GM10248 (cell line): ENCODE measurements at regions of chr1 and their contacts with region 1.

Region 1: DNA sequence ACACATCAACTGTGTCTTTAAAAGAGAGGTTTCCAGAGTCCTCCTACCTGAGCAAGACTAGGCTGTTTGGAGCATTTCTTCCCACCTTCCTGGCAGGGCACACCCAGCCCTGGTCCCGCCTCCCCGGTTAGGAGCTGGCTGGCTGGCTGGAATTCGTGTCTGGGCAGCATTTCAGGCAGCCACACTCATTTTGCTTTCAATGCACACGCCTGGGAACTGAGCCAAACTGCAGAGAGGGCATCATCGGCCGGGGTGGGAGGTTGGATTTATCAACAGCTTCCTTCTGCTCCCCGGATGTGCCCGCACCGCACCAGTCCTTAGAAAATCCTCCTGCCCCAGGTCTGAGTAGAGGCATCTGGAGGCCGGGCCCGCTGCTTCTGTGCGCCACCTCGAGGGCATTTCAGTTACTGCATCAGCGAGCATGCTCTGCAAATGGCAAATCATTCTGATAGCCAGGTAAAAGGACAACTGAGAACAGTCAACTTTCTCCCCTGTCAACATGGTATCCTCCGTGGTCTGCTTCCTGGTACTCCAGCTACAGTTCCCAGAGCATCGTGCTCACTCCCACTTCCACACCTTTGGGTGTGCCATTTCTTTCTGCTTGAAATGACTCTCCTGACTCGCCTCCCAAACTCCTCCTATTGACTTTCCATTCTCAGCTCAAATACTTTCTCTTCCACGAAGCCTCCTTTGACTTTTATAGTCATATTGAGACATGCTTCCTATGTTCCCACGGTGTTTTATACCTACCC is 20.6 kb downstream of the TCEA3 start:
- DNase-seq: peak; percentile 83
- CTCF ChIP-seq: peak; percentile 96

Region 2: DNA sequence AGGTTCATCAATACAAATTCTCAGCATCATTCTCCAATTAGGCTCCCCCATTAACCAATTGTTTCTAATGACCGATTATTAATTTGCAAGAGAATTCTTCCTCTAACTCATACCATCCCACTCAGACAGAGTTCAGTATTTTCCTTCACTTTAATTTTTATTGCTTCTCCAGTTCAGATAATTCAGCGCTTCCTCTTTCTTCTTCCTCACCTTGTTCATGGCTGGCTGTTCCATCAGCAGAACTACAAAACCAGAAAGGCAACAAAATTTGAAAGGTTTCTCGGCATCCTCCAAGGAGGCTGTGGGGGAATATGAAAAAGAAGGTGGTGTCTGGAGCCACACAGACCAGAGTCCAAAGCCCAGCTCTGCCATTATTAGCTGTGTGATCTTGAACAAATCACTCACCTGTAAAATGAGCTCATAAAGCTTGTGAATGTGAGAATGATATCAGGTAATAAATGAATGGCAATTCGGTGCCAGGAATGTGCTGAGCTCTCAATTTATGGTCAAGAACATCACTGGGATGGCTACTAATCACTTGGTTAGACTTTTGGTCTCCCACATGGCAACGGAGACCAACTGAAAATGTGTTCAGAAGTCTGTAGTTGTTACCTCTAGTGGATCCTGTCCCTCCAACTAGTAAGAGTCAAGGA is 22.6 kb before region 1 on chr1:
- CTCF ChIA-PET with region 1: interaction called, 11 read pairs
- POLR2A ChIA-PET with region 1: no interaction called
- DNase-seq: no peak
- CTCF ChIP-seq: no peak

Region 3: DNA sequence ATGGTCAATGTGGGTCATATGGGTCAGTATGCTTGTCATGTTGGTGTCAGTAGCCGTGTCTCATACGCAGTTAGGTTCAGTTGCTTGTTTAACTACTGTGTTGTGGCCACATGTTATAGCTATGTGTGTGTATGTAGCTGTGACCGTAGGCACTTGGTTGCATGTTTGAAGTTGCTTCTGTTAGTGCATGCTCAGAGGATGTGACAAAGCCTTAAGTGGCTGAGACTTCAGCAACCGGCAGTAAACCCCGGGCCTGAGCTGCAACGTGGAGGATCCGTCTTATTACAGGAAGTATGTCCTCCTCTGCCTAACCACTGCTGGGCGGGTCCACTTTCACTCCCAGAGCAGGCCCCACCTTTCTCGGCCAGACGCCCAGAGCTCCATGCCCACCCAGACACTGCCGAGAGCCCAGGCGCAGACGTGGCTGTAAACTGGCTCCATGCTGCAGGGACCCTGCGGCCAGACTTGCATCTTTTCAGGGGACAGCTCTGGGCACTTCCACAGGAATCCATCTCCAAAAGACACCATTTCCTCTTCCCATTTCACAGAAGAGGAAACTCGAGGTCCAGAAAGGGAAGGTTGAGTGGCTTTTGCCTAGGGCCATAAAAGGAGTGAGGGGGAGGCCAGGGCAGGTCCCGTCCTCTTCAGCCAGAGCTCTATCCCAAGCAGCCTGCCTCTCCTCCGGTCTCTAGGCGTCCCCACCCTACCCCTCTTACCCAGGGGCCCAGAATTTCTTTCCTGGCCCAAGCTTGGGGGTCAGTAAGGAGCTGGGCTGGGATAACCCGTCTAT is 18.5 kb after region 1 on chr1:
- CTCF ChIA-PET with region 1: interaction called, 13 read pairs
- POLR2A ChIA-PET with region 1: no interaction called
- DNase-seq: no peak
- CTCF ChIP-seq: no peak

Region 4: DNA sequence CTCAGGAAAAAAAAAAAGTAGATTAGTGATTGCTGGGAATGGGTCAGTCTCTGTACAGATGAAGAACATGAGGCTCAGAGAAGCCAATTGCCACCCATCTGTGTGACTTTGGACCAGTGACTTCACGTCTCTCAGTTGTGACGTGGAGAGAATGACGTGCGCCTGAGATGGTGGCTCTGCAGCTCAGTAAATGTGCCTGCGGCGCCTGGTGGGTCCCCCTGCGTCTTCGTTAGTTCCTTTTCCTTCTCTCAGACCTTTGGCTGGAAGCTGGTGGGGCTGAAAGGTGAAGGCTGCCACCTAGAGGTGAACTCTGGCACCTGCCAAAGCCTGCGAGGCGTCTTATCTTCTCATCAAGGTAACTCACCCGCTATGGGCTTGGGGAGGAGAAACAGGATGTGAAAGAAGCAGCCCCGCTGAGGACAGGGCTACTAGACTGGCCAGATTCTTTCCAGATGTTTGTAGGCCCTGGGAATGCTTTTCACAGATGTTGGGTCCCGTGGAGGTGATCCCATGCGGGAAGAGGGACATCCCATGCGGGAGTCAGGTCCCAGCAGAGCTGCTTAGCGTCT is 135.9 kb after region 1 on chr1:
- CTCF ChIA-PET with region 1: no interaction called
- POLR2A ChIA-PET with region 1: no interaction called
- DNase-seq: peak; percentile 91
- CTCF ChIP-seq: peak; percentile 95